Natural killer cell (primary cell): ENCODE measurements at regions of chr5 and their contacts with region 1.

Region 1: GRCh38 chr5:159156426-159157238 is 52.7 kb downstream of the RNF145 start:
- DNase-seq: peak in 1 of 2 donors; percentile 88
- ATAC-seq: peak; percentile 76 to 80 (median 79)
- H3K4me3 ChIP-seq: no peak overlapping the region
- H3K4me3 Mint-ChIP-seq: no peak overlapping the region
- H3K27ac ChIP-seq: no peak overlapping the region
- H3K27ac Mint-ChIP-seq: peak overlapping the region in 1 of 2 donors; percentile 42
- H3K4me1 ChIP-seq: peaks cover 4% of the 10 kb centered on the region
- H3K4me1 Mint-ChIP-seq: peaks cover 10 to 12% of the 10 kb centered on the region in 2 donors
- H3K27me3 ChIP-seq: no peaks in the 10 kb centered on the region
- H3K27me3 Mint-ChIP-seq: peaks cover 0 to under 1% of the 10 kb centered on the region in 2 donors
- CTCF ChIP-seq: peak; percentile 88

Region 2: GRCh38 chr5:158553195-158553961 is 603.3 kb before region 1 on chr5:
- intact Hi-C with region 1: no loop called
- DNase-seq: no peak
- ATAC-seq: no peak
- H3K4me3 ChIP-seq: no peak overlapping the region
- H3K4me3 Mint-ChIP-seq: no peak overlapping the region
- H3K27ac ChIP-seq: no peak overlapping the region
- H3K27ac Mint-ChIP-seq: no peak overlapping the region
- H3K4me1 ChIP-seq: no peaks in the 10 kb centered on the region
- H3K4me1 Mint-ChIP-seq: no peaks in the 10 kb centered on the region
- H3K27me3 ChIP-seq: no peaks in the 10 kb centered on the region
- H3K27me3 Mint-ChIP-seq: no peaks in the 10 kb centered on the region
- CTCF ChIP-seq: no peak

Region 3: GRCh38 chr5:159262859-159263567 is 106.4 kb after region 1 on chr5 and contains the start of gene UBLCP1:
- intact Hi-C with region 1: loop called (anchors 2 kb)
- DNase-seq: peak; percentile 67 to 92
- ATAC-seq: peak; percentile 78 to 87 (median 81)
- H3K4me3 ChIP-seq: peak within 1 kb of the TSS; percentile 69
- H3K4me3 Mint-ChIP-seq: peak within 1 kb of the TSS; percentile 98
- H3K27ac ChIP-seq: peak within 1 kb of the TSS; percentile 89
- H3K27ac Mint-ChIP-seq: peak within 1 kb of the TSS; percentile 97 to 99
- H3K4me1 ChIP-seq: peaks cover 9% of the 10 kb centered on the region
- H3K4me1 Mint-ChIP-seq: peaks cover 39 to 50% of the 10 kb centered on the region in 2 donors
- H3K27me3 ChIP-seq: no peaks in the 10 kb centered on the region
- H3K27me3 Mint-ChIP-seq: peaks cover 0 to 11% of the 10 kb centered on the region in 2 donors
- CTCF ChIP-seq: no peak
- total RNA-seq, gene UBLCP1: 30.0 to 37.9 (median 32.1) TPM

Region 4: GRCh38 chr5:159316519-159317383 is 160.1 kb after region 1 on chr5:
- intact Hi-C with region 1: loop called (anchors 1 kb)
- DNase-seq: peak in 1 of 2 donors; percentile 75
- ATAC-seq: peak; percentile 49 to 68 (median 61)
- H3K4me3 ChIP-seq: no peak overlapping the region
- H3K4me3 Mint-ChIP-seq: no peak overlapping the region
- H3K27ac ChIP-seq: no peak overlapping the region
- H3K27ac Mint-ChIP-seq: no peak overlapping the region
- H3K4me1 ChIP-seq: no peaks in the 10 kb centered on the region
- H3K4me1 Mint-ChIP-seq: no peaks in the 10 kb centered on the region
- H3K27me3 ChIP-seq: no peaks in the 10 kb centered on the region
- H3K27me3 Mint-ChIP-seq: peaks cover 2 to 23% of the 10 kb centered on the region in 2 donors
- CTCF ChIP-seq: peak; percentile 43

Region 5: GRCh38 chr5:159965031-159965837 is 808.6 kb after region 1 on chr5:
- intact Hi-C with region 1: loop called (anchors 5 kb)
- DNase-seq: peak in 1 of 2 donors; percentile 33
- ATAC-seq: peak; percentile 49 to 54 (median 52)
- H3K4me3 ChIP-seq: no peak overlapping the region
- H3K4me3 Mint-ChIP-seq: no peak overlapping the region
- H3K27ac ChIP-seq: no peak overlapping the region
- H3K27ac Mint-ChIP-seq: no peak overlapping the region
- H3K4me1 ChIP-seq: no peaks in the 10 kb centered on the region
- H3K4me1 Mint-ChIP-seq: peaks cover 0 to 5% of the 10 kb centered on the region in 2 donors
- H3K27me3 ChIP-seq: peaks cover 8% of the 10 kb centered on the region
- H3K27me3 Mint-ChIP-seq: peaks cover 23 to 52% of the 10 kb centered on the region in 2 donors
- CTCF ChIP-seq: peak; percentile 23

Region 6: DNA sequence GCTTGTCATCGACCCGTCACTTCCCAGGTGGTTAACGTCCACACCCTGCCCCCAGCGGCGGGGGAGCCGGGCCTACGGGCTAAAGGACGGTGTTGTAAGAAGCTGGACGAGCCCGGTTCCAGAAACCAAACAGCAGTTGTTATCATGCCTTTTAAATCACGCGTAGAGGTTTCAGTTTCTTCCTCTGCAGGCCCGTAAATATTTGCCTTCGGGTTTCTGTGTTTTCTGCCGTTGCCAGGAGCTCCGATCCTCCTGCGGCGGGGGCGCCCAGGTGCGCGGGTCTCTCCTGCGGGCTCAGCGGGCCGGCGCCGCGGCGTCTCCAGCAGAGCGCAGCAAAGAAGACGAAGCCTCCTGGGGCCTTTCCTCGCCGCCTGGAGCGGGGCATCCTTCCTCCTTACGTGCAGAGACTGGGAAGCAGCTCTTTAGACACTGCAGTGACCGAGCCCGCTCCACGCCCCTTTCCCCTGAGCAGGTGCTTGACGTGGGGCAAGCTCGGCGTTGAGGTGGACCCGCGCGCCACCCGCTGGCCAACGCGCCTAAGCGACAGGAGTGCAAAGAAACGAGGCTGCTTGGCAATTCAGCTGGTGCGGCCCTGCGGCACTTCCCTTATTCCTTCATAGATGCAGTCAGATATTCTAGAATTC is 830.5 kb after region 1 on chr5:
- intact Hi-C with region 1: loop called (anchors 2 kb)
- DNase-seq: peak; percentile 41 to 82
- ATAC-seq: peak; percentile 60 to 89 (median 87)
- H3K4me3 ChIP-seq: peak overlapping the region; percentile 9
- H3K4me3 Mint-ChIP-seq: peak overlapping the region; percentile 31
- H3K27ac ChIP-seq: no peak overlapping the region
- H3K27ac Mint-ChIP-seq: no peak overlapping the region
- H3K4me1 ChIP-seq: peaks cover 9% of the 10 kb centered on the region
- H3K4me1 Mint-ChIP-seq: peaks cover 0 to 6% of the 10 kb centered on the region in 2 donors
- H3K27me3 ChIP-seq: peaks cover 8% of the 10 kb centered on the region
- H3K27me3 Mint-ChIP-seq: peaks cover 46 to 78% of the 10 kb centered on the region in 2 donors
- CTCF ChIP-seq: peak; percentile 29

Region 7: GRCh38 chr5:160548949-160549665 is 1392.5 kb after region 1 on chr5:
- intact Hi-C with region 1: no loop called
- DNase-seq: no peak
- ATAC-seq: no peak
- H3K4me3 ChIP-seq: no peak overlapping the region
- H3K4me3 Mint-ChIP-seq: no peak overlapping the region
- H3K27ac ChIP-seq: no peak overlapping the region
- H3K27ac Mint-ChIP-seq: no peak overlapping the region
- H3K4me1 ChIP-seq: no peaks in the 10 kb centered on the region
- H3K4me1 Mint-ChIP-seq: no peaks in the 10 kb centered on the region
- H3K27me3 ChIP-seq: no peaks in the 10 kb centered on the region
- H3K27me3 Mint-ChIP-seq: peaks cover 0 to 30% of the 10 kb centered on the region in 2 donors
- CTCF ChIP-seq: no peak